ENCODE measurements at regions of chr2 and their contacts with region 1.

Region 1: GRCh38 chr2:195656859-195657633 is at the start of gene SLC39A10:
- DNase-seq: peak; percentile 98
- H3K4me3 Mint-ChIP-seq: peak within 1 kb of the TSS; percentile 81
- H3K27ac Mint-ChIP-seq: peak within 1 kb of the TSS; percentile 93
- H3K4me1 Mint-ChIP-seq: peaks cover 7% of the 10 kb centered on the region
- H3K27me3 Mint-ChIP-seq: no peaks in the 10 kb centered on the region
- CTCF ChIP-seq: no peak
- total RNA-seq, gene SLC39A10: 47.8 and 59.8 TPM in 2 replicates

Region 2: GRCh38 chr2:194545978-194546377 is 1111.1 kb before region 1 on chr2:
- CTCF ChIA-PET with region 1: no interaction called
- POLR2A ChIA-PET with region 1: interaction called, 3 read pairs
- intact Hi-C with region 1: loop called (anchors 1 kb)
- DNase-seq: peak; percentile 16
- H3K4me3 Mint-ChIP-seq: no peak overlapping the region
- H3K27ac Mint-ChIP-seq: peak overlapping the region; percentile 16
- H3K4me1 Mint-ChIP-seq: peaks cover 9% of the 10 kb centered on the region
- H3K27me3 Mint-ChIP-seq: no peaks in the 10 kb centered on the region
- CTCF ChIP-seq: peak; percentile 35

Region 3: DNA sequence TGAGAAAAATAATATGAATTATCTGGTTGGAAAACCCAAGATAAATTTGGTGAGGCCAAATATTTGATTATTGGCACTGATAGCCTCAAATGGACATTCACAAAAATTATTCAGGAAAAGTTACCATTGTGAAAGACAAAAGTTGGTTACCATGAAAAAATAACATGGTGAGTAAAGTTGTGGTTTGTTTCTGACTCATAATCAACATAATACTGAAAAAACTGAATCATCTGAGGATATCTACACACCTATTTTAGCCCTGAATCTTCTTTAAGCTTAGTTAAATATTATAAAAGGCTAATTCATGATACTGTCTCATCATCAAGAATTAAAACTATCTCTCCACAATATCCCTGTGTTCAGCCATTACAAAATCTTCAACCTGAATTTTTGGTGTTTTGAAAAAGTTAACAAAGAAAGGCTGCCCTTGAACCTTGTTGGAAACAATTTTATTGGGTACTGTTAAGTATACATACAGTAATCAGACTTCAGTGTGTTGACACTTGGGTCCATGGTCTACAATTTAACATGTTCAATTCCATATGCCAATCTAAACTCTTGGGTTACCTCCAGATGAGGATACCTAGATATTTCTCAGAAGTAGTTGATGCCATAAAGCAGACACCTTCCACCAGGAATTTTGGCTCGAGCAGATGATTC is 607.5 kb before region 1 on chr2:
- CTCF ChIA-PET with region 1: no interaction called
- POLR2A ChIA-PET with region 1: no interaction called
- intact Hi-C with region 1: no loop called
- DNase-seq: peak; percentile 55
- H3K4me3 Mint-ChIP-seq: no peak overlapping the region
- H3K27ac Mint-ChIP-seq: no peak overlapping the region
- H3K4me1 Mint-ChIP-seq: peaks cover 16% of the 10 kb centered on the region
- H3K27me3 Mint-ChIP-seq: no peaks in the 10 kb centered on the region
- CTCF ChIP-seq: no peak

Region 4: DNA sequence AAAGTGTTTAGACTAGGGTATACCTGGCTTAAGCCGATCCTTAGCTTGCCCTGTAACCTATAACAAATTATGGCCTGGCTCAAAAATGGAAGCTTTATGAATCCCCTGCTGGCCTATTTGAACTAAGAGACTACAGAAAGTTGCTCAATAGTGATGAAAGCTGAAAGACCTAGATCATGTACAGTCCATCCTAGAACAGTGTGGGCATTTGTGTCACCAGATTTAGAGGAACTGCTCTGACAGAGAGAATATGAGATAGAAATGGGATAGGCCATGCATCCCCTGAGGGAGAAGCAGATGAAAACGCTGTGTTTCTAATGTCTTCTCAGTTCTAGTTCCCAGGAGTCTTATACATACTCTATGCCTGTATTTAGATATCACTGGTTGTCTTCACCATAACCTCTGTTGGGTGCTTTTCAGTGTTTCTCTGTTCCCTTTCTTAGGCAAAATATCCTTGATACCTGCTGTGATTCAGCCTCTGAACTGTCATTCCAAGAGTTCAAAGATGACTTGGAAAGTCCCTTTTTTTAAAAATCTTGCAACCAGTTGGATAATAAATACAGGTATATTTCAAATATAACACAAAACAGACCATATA is 246.9 kb before region 1 on chr2:
- CTCF ChIA-PET with region 1: interaction called, 6 read pairs
- POLR2A ChIA-PET with region 1: interaction called, 7 read pairs
- intact Hi-C with region 1: loop called (anchors 5 kb)
- DNase-seq: no peak
- H3K4me3 Mint-ChIP-seq: no peak overlapping the region
- H3K27ac Mint-ChIP-seq: no peak overlapping the region
- H3K4me1 Mint-ChIP-seq: peaks cover 14% of the 10 kb centered on the region
- H3K27me3 Mint-ChIP-seq: no peaks in the 10 kb centered on the region
- CTCF ChIP-seq: no peak

Region 5: DNA sequence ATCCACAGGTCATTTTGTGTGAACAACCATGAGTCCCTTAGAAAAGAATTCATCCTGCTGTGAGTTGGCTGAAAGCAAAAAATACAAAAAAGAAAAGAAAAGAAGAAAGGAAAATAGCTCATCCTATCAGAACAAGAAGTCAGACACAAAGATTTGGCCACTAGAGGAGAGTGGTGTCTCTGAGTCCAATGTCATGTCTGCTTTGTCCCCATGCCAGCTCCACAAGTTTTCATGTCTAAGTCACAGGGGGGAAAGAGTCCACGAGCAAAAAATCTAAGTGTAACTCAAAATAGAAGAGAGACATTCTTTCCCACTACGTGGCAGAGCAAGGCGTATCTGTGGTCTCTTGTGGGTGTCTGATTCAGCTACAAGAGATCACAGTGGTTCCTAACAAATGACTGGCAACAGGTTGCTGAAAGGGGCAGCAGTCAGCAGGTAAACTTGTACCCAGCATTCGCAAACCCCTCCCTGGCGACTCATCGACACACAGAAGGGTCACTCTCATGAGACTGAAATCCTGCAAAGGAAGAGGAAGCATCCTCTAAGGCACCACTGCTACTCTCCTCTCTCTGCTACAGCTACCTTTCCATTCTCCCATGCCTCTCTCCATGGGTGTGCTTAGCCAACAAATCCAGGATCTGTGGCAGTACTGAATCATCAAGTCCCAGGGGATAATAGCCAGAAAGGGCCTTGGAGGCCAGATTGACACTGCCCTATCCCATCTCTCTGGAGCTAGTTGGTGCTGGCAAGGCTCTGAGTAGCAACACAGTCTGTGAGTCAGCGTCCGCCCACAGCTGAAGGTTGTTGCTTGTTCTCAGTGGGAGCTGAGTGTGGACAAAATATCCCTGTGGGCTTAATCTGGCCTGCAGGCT is 123.0 kb before region 1 on chr2:
- CTCF ChIA-PET with region 1: interaction called, 8 read pairs
- POLR2A ChIA-PET with region 1: interaction called, 33 read pairs
- intact Hi-C with region 1: no loop called
- DNase-seq: peak; percentile 91
- H3K4me3 Mint-ChIP-seq: no peak overlapping the region
- H3K27ac Mint-ChIP-seq: peak overlapping the region; percentile 91
- H3K4me1 Mint-ChIP-seq: peaks cover 24% of the 10 kb centered on the region
- H3K27me3 Mint-ChIP-seq: no peaks in the 10 kb centered on the region
- CTCF ChIP-seq: no peak

Region 6: DNA sequence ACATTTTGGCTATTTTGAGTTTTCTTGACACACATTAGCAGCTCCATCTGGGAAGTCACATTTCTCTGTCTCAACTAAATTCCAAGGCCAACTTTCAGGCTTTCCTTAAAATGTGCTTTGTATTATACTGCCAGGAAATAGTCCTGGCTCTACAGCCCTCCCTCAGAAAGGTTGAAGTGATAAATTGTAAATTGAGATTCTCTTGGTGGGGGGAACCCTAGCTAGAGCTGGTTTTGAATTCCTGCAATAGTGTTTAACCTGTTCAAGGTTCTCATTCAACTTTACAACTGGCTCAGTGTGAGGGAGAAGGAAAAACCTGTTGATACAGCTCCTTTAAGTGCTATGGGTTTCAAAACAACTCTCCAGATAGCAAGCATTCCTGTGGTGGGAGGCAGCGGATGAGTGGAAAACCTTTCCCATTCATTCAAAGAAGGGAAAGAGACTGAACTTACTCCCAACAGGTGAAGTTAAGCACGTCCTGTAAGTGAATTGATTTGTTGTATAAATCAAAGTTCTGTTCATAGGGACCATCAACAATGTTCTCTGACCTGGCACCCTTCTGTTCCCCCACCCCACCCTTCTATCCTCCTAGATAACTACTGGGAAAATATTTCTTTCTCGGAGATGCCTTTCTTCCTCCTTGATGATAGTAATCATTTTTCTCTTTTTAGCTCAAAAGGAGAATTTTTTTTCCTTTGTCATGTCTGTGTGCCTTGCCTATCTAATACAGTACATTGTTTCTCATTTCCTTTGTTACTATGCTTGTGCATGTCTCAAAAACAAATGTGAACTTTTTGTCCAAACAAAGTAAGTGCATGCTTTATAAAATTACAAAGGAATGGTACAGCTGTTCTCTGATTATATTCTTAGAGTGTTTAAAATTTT is 44.2 kb before region 1 on chr2:
- CTCF ChIA-PET with region 1: interaction called, 4 read pairs
- POLR2A ChIA-PET with region 1: interaction called, 13 read pairs
- intact Hi-C with region 1: no loop called
- DNase-seq: peak; percentile 41
- H3K4me3 Mint-ChIP-seq: no peak overlapping the region
- H3K27ac Mint-ChIP-seq: no peak overlapping the region
- H3K4me1 Mint-ChIP-seq: peaks cover 14% of the 10 kb centered on the region
- H3K27me3 Mint-ChIP-seq: no peaks in the 10 kb centered on the region
- CTCF ChIP-seq: no peak

Region 7: DNA sequence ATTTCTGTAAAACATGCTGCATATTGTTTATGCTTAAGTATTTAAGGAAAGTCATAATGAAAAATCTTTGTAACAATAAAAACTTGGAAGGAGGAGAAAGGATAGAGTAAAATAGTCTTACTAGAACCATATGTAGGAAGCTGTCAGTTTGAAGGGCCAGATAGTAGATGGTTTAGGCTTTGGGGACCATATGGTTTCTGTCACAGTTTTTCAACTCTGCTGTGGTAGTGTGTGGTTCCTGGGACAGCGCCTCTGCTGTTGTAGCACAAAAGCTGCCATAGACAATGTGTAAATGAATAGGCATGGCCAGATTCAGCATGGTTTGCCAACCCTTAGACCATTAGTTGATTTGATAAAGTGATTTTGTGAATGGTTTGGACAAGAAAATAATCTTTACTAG is 75.5 kb after region 1 on chr2:
- CTCF ChIA-PET with region 1: no interaction called
- POLR2A ChIA-PET with region 1: no interaction called
- intact Hi-C with region 1: no loop called
- DNase-seq: no peak
- H3K4me3 Mint-ChIP-seq: no peak overlapping the region
- H3K27ac Mint-ChIP-seq: no peak overlapping the region
- H3K4me1 Mint-ChIP-seq: peaks cover 5% of the 10 kb centered on the region
- H3K27me3 Mint-ChIP-seq: no peaks in the 10 kb centered on the region
- CTCF ChIP-seq: no peak

Region 8: GRCh38 chr2:195820373-195820772 is 163.3 kb after region 1 on chr2:
- CTCF ChIA-PET with region 1: no interaction called
- POLR2A ChIA-PET with region 1: no interaction called
- intact Hi-C with region 1: no loop called
- DNase-seq: peak; percentile 47
- H3K4me3 Mint-ChIP-seq: no peak overlapping the region
- H3K27ac Mint-ChIP-seq: peak overlapping the region; percentile 32
- H3K4me1 Mint-ChIP-seq: peaks cover 20% of the 10 kb centered on the region
- H3K27me3 Mint-ChIP-seq: no peaks in the 10 kb centered on the region
- CTCF ChIP-seq: no peak

Region 9: DNA sequence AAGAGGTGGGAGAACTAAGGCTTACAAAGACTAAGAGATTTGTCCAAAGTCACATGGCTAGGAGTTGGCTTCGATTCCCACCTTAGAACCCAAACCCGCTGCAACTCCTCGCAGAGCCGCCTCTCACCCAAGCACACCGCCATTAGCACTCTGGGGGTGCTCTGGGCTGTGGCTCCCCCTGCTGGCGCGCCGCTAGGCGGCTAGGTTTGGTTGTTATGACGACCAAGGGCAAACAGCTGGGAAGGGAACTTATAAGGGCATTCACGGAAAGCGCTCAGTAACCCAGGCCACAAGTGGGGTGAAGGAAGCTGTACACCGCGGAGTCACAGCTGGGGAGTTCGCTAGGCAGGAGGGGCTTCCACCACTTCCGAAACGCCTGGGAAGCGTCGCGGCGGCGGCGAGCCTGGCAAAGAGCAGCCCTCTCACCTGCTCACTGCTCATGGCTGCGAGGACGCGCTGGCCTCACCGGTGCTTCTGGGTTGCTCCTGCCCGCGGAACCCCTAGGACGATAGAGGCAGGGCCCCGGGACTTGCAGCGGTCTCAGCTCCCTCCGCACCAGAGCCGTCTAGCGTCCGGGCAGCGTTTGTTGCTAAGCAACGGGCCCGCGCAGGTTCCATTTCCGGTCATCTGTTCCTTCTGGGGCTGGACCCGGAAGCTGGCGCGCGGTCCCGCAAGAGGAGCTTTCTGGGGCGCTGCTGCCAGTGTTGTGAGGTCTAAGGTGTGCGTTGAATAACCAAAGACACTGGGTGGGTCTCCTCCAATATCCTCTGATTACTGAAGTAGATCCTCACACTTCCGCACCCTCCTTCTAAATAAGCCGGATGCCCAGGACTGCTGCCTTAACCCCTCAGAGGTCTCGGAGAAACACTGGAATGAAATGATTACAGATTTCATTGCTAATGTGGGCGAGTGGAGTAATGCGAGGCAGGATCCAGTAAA is 411.5 kb after region 1 on chr2 and contains the start of gene DNAH7:
- CTCF ChIA-PET with region 1: interaction called, 5 read pairs
- POLR2A ChIA-PET with region 1: interaction called, 6 read pairs
- intact Hi-C with region 1: loop called (anchors 2 kb)
- DNase-seq: peak; percentile 82
- H3K4me3 Mint-ChIP-seq: peak within 1 kb of the TSS; percentile 93
- H3K27ac Mint-ChIP-seq: peak within 1 kb of the TSS; percentile 99
- H3K4me1 Mint-ChIP-seq: peaks cover 5% of the 10 kb centered on the region
- H3K27me3 Mint-ChIP-seq: no peaks in the 10 kb centered on the region
- CTCF ChIP-seq: peak; percentile 54
- total RNA-seq, gene DNAH7: 0.91 and 0.98 TPM in 2 replicates

Region 10: GRCh38 chr2:196239622-196240587 is 582.9 kb after region 1 on chr2:
- CTCF ChIA-PET with region 1: no interaction called
- POLR2A ChIA-PET with region 1: no interaction called
- intact Hi-C with region 1: no loop called
- DNase-seq: peak; percentile 81
- H3K4me3 Mint-ChIP-seq: no peak overlapping the region
- H3K27ac Mint-ChIP-seq: peak overlapping the region; percentile 98
- H3K4me1 Mint-ChIP-seq: peaks cover 19% of the 10 kb centered on the region
- H3K27me3 Mint-ChIP-seq: no peaks in the 10 kb centered on the region
- CTCF ChIP-seq: no peak